Activated CD4-positive, alpha-beta memory T cell treated with anti-CD3 and anti-CD28 coated beads, Interleukin-2, amount 10 ng/mL, durations not matched to agents 7 days and 5 days (primary cell): ENCODE measurements at regions of chr9 and their contacts with region 1.

Region 1: DNA sequence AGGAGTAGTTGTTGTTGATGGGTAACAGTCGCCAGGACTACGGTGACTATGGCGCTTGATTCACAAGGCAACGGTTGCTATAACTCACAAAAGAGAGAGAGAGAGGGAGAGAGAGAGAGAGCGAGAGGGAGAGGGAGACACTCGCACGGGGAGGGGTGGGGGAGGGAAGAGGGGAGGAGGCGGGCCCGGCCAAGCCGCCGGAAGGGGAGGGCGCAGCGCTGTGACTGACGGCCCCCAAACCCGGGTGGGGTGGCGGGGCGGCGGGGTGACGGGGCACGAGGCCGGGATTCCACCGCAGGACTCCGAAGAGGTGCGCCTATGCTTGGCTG is at the start of gene RFX3:
- DNase-seq: peak; percentile 92
- H3K4me3 Mint-ChIP-seq: peak within 1 kb of the TSS; percentile 96
- H3K27ac Mint-ChIP-seq: peak within 1 kb of the TSS; percentile 100
- H3K4me1 Mint-ChIP-seq: peaks cover 51% of the 10 kb centered on the region
- H3K27me3 Mint-ChIP-seq: no peaks in the 10 kb centered on the region
- total RNA-seq, gene RFX3: 13.3 to 13.8 TPM

Region 2: DNA sequence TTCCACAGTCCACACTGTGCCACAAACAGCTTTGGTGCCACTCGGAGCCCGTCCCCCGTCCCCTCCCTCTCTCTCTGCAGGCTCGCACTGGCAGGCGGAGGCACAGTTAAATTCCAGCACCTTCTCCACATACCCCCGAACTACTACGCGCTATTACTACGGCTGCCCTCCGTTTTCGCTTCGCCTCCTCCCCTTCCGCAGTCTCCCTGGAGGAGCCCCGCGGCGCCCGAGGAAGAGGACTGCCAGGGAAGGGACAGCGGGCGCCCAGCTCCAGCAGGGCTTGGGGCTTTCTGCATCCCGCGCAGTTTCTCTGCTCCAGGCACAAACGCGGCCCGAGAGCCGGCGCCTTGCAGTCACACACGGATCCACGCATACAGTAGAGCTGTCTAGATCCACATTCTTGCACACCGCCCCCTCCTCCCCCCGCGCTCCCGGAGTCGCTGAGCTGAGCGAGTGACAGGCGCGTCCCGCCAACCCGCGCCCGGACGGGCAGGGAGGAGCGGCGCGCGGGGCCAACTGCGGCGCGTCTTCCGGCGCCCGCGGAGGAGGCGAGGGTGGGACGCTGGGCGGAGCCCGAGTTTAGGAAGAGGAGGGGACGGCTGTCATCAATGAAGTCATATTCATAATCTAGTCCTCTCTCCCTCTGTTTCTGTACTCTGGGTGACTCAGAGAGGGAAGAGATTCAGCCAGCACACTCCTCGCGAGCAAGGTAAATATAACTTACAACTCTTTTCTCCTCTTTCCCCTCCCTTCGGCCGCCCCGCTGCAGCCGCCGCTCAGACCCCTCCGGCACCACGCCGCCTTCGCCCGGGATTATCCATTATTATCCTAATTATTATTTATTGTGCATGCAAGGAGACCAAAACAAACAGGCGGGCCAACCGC is 1510.9 kb before region 1 on chr9 and contains the start of gene SMARCA2:
- CTCF ChIA-PET with region 1: no interaction called
- POLR2A ChIA-PET with region 1: interaction called, 10 read pairs
- DNase-seq: peak; percentile 97
- H3K4me3 Mint-ChIP-seq: peak within 1 kb of the TSS; percentile 98
- H3K27ac Mint-ChIP-seq: peak within 1 kb of the TSS; percentile 100
- H3K4me1 Mint-ChIP-seq: peaks cover 44% of the 10 kb centered on the region
- H3K27me3 Mint-ChIP-seq: peaks cover 17% of the 10 kb centered on the region
- total RNA-seq, gene SMARCA2: 207 to 224 TPM

Region 3: DNA sequence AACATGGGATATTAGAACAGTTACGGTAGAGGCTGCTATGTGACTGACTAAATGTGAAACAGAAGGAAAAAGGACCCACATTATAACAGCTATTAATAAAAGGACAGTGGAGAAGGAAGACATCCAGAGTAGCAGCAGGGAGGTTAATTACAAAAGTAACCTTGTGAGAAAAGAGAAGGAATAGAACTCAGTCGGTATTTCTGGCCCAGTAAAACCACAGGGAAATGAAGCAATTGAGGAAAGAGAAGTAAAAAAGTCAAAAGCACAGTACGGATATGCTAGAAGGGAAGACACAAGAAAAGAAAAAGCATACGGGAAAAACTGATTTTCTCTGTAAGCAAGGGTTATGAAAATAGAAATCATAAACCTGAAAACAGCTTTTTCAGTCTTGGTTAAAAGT is 164.7 kb before region 1 on chr9:
- CTCF ChIA-PET with region 1: no interaction called
- POLR2A ChIA-PET with region 1: no interaction called
- DNase-seq: no peak
- H3K4me3 Mint-ChIP-seq: no peak overlapping the region
- H3K27ac Mint-ChIP-seq: no peak overlapping the region
- H3K4me1 Mint-ChIP-seq: no peaks in the 10 kb centered on the region
- H3K27me3 Mint-ChIP-seq: no peaks in the 10 kb centered on the region

Region 4: GRCh38 chr9:3447788-3448187 is 78.0 kb before region 1 on chr9:
- CTCF ChIA-PET with region 1: no interaction called
- POLR2A ChIA-PET with region 1: no interaction called
- DNase-seq: no peak
- H3K4me3 Mint-ChIP-seq: no peak overlapping the region
- H3K27ac Mint-ChIP-seq: no peak overlapping the region
- H3K4me1 Mint-ChIP-seq: no peaks in the 10 kb centered on the region
- H3K27me3 Mint-ChIP-seq: no peaks in the 10 kb centered on the region

Region 5: DNA sequence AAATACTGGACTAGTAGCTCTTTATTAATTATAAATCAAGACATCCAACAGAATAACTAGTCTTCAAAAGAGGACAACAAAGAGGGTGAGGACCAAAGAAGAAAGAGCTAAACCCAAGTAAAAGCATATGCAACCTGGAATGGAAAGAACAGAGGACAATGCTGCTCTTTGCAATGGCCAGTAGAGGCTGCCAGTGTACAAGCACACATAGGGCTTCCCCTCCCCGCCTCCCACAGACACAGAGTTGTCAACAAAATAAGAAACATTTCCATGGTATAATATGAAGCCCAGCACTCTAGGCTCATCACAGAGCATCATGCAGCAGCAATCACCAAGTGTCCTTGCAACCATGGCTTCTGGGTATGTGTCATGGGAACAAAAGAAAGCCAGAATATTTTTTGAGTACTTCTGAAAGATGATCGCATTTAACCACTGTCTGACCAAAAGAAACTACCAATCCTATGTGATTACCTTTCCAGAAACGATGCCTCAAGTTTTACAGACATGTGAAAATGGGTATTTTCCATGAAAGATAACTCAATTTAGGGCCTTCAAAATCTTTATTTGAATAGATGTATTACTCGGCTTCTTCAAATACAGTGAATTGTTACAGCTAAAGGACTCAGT is 58.1 kb before region 1 on chr9:
- CTCF ChIA-PET with region 1: interaction called, 11 read pairs
- POLR2A ChIA-PET with region 1: interaction called, 16 read pairs
- DNase-seq: peak; percentile 62
- H3K4me3 Mint-ChIP-seq: no peak overlapping the region
- H3K27ac Mint-ChIP-seq: no peak overlapping the region
- H3K4me1 Mint-ChIP-seq: peaks cover 6% of the 10 kb centered on the region
- H3K27me3 Mint-ChIP-seq: no peaks in the 10 kb centered on the region

Region 6: GRCh38 chr9:3473405-3473804 is 52.4 kb before region 1 on chr9:
- CTCF ChIA-PET with region 1: interaction called, 16 read pairs
- POLR2A ChIA-PET with region 1: interaction called, 216 read pairs
- DNase-seq: no peak
- H3K4me3 Mint-ChIP-seq: no peak overlapping the region
- H3K27ac Mint-ChIP-seq: no peak overlapping the region
- H3K4me1 Mint-ChIP-seq: peaks cover 48% of the 10 kb centered on the region
- H3K27me3 Mint-ChIP-seq: no peaks in the 10 kb centered on the region

Region 7: GRCh38 chr9:3478549-3478953 is 47.2 kb before region 1 on chr9:
- CTCF ChIA-PET with region 1: interaction called, 16 read pairs
- POLR2A ChIA-PET with region 1: interaction called, 216 read pairs
- DNase-seq: no peak
- H3K4me3 Mint-ChIP-seq: peak overlapping the region; percentile 86
- H3K27ac Mint-ChIP-seq: peak overlapping the region; percentile 90
- H3K4me1 Mint-ChIP-seq: peaks cover 69% of the 10 kb centered on the region
- H3K27me3 Mint-ChIP-seq: no peaks in the 10 kb centered on the region

Region 8: GRCh38 chr9:3498691-3499090 is 27.1 kb before region 1 on chr9:
- CTCF ChIA-PET with region 1: interaction called, 3 read pairs
- POLR2A ChIA-PET with region 1: interaction called, 19 read pairs
- DNase-seq: no peak
- H3K4me3 Mint-ChIP-seq: no peak overlapping the region
- H3K27ac Mint-ChIP-seq: no peak overlapping the region
- H3K4me1 Mint-ChIP-seq: peaks cover 4% of the 10 kb centered on the region
- H3K27me3 Mint-ChIP-seq: no peaks in the 10 kb centered on the region

Region 9: DNA sequence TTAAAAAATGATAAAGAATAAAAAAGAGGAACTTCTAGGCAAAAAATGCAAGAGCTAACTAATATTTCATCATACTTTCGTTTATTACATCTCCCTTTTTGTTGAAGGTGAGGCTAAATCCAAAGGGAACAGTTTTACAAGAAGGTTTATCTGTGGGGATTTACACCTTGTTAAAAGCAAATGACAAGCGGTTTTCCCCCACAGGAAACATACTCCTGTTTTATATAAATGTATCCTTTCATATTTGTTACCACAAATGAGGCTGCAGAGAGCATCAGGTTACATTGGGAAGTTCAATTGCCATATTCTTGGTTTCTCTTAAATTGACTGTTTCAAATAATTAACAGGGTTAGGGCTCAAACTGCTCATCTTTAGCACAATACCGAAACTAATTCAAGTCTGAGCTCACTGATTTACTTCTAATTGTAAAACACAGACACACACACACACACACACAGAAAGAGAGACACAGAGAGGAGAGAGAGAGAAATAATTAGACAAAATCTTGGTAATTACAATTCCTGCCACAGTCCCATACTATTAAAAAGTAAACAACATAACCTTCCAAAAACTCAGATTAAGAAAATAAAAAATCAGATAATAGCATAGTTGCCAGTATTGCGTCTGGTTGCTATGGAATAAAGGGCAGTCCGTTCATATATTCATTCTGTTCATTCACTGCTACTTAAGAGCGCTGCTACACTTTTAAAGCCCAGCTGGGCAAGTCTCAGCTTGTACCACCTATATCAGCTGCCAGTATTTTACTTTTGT is 17.1 kb before region 1 on chr9:
- CTCF ChIA-PET with region 1: no interaction called
- POLR2A ChIA-PET with region 1: interaction called, 21 read pairs
- DNase-seq: no peak
- H3K4me3 Mint-ChIP-seq: no peak overlapping the region
- H3K27ac Mint-ChIP-seq: no peak overlapping the region
- H3K4me1 Mint-ChIP-seq: peaks cover 21% of the 10 kb centered on the region
- H3K27me3 Mint-ChIP-seq: no peaks in the 10 kb centered on the region